ENCODE measurements at regions of chr16 and their contacts with region 1.

Region 1: DNA sequence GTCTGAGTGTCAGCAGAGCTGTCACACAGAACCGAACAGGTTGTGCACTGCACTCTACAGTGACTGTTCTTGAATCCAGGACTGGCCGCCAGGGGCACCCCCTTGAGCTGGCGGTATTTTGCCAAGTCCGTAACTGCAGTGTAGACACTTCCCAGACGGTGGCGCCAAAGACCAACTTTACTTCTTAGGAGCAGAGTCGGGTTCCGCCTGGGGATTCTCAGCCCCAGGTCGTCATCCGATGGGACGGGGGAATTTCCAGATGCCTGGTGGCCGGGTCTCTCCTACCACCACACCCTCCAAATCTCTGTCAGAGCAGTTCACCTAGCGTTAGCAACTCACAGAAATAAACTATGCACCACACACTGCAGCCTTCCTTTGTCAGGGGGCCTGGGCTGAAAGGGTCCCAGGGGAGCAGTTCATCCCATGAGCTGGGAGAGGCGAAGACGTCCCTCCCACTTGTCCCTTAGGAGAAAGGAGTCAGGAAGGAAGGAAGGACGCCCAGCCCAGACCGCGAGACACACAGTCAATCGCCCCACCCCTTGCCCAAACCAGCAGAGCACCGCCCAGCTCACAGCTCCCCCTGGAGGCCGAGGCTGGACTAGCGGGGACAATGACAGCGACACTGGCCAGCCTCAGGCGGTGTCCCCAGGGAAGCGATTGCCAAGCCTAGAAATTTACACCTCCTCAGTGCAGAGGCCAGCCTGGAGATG is 7.4 kb upstream of the RIPOR1 start:
- DNase-seq: peak; percentile 94 to 96
- ATAC-seq: peak; percentile 88 to 91
- H3K4me3 ChIP-seq: peak overlapping the region; percentile 64
- H3K27ac ChIP-seq: peak overlapping the region; percentile 92 to 95
- H3K4me1 ChIP-seq: peaks cover 52% of the 10 kb centered on the region
- CTCF ChIP-seq: peak; percentile 93
- EP300 ChIP-seq: no peak
- POLR2A ChIP-seq: peak; percentile 80
- RAD21 ChIP-seq: peak; percentile 93 to 95

Region 2: DNA sequence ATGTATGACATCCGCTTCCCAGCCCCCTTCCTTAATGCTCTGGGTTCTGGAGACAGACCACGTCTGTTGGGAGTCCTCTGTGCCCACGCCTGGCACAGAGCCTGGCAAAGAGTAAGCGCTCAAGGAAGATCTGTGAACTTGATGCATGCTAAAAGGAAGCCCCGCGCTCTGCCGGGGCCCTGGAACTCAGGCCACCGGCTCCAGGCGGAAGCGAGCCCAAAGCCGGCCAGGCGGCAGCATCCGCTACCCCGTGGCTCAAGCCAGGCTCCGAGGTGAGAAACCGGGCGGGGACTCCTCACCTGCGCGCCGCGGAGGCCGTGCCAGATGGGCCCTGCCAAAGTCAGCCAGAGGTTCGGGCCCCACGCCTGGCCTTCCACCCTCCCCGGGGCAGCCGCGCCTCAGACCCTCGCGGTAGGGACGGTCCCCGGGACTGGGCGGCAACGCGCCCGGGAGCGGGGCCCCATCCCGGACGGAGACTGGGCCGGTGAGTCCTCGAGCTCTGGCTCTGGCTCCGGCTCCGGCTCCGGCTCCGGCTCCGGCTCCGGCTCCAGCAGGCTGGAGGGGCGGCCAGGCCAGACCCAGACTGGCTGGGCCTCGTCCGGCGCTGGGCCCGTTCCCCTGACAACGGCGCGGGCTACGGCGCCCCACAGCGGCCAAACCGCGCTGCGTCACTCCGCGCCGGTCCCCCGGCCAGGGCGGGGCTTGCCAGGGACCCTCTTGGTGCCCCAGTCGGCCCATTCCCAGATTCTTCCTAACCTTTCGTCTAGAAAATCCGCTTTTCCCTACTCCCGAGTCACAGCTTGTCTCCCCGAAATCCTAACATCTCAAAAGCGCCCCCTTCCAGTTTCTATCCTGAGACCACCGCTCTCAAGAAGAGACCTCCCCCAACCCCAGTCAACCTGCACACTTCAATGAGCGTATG is 105.1 kb before region 1 on chr16 and contains the start of gene ZDHHC1:
- CTCF ChIA-PET with region 1: no interaction called
- POLR2A ChIA-PET with region 1: no interaction called
- DNase-seq: peak; percentile 78 to 89
- ATAC-seq: peak; percentile 94 to 96
- H3K4me3 ChIP-seq: peak within 1 kb of the TSS; percentile 80
- H3K27ac ChIP-seq: peak within 1 kb of the TSS; percentile 91 to 96
- H3K4me1 ChIP-seq: peaks cover 9% of the 10 kb centered on the region; the same call in 2 of the 3 replicates
- CTCF ChIP-seq: peak; percentile 70
- EP300 ChIP-seq: no peak
- POLR2A ChIP-seq: peak; percentile 49; the same call in 1 of the 2 replicates
- RAD21 ChIP-seq: peak; percentile 49 to 69
- polyA plus RNA-seq, gene ZDHHC1: 3.5 and 3.8 TPM in 2 replicates

Region 3: DNA sequence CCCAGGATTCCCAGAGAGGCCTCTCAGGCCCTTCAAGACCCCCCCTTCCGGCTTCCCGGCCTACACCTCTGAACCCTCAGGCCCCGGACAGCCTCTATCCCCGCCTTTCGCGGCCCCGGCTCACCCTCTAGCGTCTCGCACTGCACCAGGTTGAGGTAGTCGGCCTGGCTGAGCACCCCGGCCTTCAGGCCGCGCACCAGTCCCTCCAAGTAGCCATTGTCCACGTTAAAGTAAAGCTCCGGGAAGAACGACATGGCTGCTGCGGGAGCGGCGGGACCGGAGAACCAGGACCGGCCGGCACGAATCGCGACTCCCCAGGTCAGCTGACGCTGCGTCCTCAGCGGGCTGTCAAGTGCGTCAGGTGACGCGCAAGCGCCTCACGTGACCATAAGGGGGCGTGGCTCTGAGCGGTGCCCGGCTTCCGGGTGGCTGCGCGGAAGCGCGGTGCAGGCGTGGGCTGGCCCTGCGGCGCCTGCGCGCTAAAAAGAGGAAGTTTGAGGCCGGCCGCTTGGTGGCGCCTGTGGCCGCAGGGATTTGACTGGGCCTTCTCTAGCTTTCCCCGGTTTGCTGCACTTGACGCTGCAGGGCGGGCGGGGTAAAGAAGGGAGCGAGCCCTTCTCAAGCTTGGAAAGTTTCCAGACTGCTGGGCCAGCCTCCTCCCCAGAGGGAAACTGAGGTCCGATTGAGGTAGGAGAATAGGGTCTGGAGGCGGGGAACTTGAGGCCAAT is 40.3 kb before region 1 on chr16 and contains the start of gene ATP6V0D1:
- CTCF ChIA-PET with region 1: interaction called, 117 read pairs
- POLR2A ChIA-PET with region 1: interaction called, 12 read pairs
- DNase-seq: peak; percentile 95 to 98
- ATAC-seq: peak; percentile 91 to 93
- H3K4me3 ChIP-seq: peak within 1 kb of the TSS; percentile 91
- H3K27ac ChIP-seq: peak within 1 kb of the TSS; percentile 86 to 88
- H3K4me1 ChIP-seq: peaks cover 13% of the 10 kb centered on the region
- CTCF ChIP-seq: peak; percentile 88
- EP300 ChIP-seq: 0 out of 5 replicates have a peak, but pooled peaks of 1 of the 2 experiments have one; percentile 14
- POLR2A ChIP-seq: peak; percentile 62
- RAD21 ChIP-seq: peak; percentile 46 to 61; a peak in 4 of 5 replicates
- polyA plus RNA-seq, gene ATP6V0D1: 45.6 and 45.7 TPM in 2 replicates

Region 4: GRCh38 chr16:67504041-67505021 is 16.9 kb before region 1 on chr16:
- CTCF ChIA-PET with region 1: interaction called, 278 read pairs
- POLR2A ChIA-PET with region 1: no interaction called
- DNase-seq: peak in 1 of 2 experiments; percentile 31
- ATAC-seq: peak; percentile 24 to 28; a peak in 3 of 6 replicates
- H3K4me3 ChIP-seq: no peak overlapping the region
- H3K27ac ChIP-seq: no peak overlapping the region
- H3K4me1 ChIP-seq: peaks cover 8% of the 10 kb centered on the region; the same call in 1 of the 3 replicates
- CTCF ChIP-seq: no peak
- EP300 ChIP-seq: no peak
- POLR2A ChIP-seq: no peak
- RAD21 ChIP-seq: no peak

Region 5: DNA sequence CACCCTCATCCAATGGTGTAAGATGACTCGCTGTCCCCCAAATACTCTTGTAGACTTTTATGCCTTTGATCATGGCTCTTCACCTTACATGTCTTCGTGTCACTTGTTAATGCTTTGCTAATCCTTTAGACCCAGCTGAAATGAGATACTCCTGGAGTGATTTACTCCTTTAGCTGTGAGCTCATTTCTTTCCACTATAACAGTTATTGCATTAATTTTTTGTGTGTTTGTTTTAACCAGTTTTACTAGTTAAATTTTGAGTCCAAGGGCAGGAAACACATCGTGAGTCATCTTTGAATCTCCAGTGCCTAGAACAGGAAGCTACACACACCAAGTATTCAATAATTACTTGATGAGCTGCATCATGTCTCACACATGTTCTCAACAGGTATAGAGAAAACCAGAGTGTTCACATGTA is 34.6 kb after region 1 on chr16:
- CTCF ChIA-PET with region 1: interaction called, 301 read pairs
- POLR2A ChIA-PET with region 1: no interaction called
- DNase-seq: no peak
- ATAC-seq: peak in 1 of 2 experiments; percentile 29; a peak in 3 of 6 replicates
- H3K4me3 ChIP-seq: no peak overlapping the region
- H3K27ac ChIP-seq: peak overlapping the region in 1 of 2 experiments; percentile 16; a peak in 3 of 6 replicates
- H3K4me1 ChIP-seq: peaks cover 13% of the 10 kb centered on the region
- CTCF ChIP-seq: no peak
- EP300 ChIP-seq: no peak
- POLR2A ChIP-seq: no peak
- RAD21 ChIP-seq: no peak

Region 6: DNA sequence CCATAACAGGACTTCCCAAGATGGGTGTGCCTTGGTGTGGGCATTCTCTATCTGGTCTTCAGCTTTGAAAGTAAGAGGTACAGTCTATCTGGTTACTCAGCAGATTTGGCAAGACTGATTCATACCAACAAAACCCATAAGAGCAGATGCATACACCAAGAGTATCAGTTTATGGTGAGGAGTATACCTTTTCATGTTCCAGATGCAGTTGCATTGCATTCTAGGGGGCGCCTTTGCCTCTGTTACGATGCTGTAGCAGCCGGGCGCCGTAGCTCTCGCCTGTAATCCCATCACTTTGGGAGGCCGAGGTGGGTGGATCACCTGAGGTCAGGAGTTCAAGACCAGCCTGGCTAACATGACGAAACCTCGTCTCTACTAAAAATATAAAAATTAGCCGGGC is 92.6 kb after region 1 on chr16:
- CTCF ChIA-PET with region 1: interaction called, 14 read pairs
- POLR2A ChIA-PET with region 1: no interaction called
- DNase-seq: peak in 1 of 2 experiments; percentile 46
- ATAC-seq: peak in 1 of 2 experiments; percentile 56; a peak in 3 of 6 replicates
- H3K4me3 ChIP-seq: no peak overlapping the region
- H3K27ac ChIP-seq: no peak overlapping the region
- H3K4me1 ChIP-seq: no peaks in the 10 kb centered on the region
- CTCF ChIP-seq: no peak
- EP300 ChIP-seq: no peak
- POLR2A ChIP-seq: no peak
- RAD21 ChIP-seq: no peak

Region 7: GRCh38 chr16:67660564-67661028 is 139.3 kb after region 1 on chr16 and contains the start of gene PARD6A:
- CTCF ChIA-PET with region 1: interaction called, 174 read pairs
- POLR2A ChIA-PET with region 1: interaction called, 7 read pairs
- DNase-seq: peak; percentile 96 to 99
- ATAC-seq: peak; percentile 66 to 81
- H3K4me3 ChIP-seq: peak within 1 kb of the TSS; percentile 91
- H3K27ac ChIP-seq: peak within 1 kb of the TSS; percentile 90 to 92
- H3K4me1 ChIP-seq: peaks cover 8% of the 10 kb centered on the region
- CTCF ChIP-seq: no peak
- EP300 ChIP-seq: no peak
- POLR2A ChIP-seq: no peak
- RAD21 ChIP-seq: no peak
- polyA plus RNA-seq, gene PARD6A: 1.7 and 1.8 TPM in 2 replicates

Region 8: DNA sequence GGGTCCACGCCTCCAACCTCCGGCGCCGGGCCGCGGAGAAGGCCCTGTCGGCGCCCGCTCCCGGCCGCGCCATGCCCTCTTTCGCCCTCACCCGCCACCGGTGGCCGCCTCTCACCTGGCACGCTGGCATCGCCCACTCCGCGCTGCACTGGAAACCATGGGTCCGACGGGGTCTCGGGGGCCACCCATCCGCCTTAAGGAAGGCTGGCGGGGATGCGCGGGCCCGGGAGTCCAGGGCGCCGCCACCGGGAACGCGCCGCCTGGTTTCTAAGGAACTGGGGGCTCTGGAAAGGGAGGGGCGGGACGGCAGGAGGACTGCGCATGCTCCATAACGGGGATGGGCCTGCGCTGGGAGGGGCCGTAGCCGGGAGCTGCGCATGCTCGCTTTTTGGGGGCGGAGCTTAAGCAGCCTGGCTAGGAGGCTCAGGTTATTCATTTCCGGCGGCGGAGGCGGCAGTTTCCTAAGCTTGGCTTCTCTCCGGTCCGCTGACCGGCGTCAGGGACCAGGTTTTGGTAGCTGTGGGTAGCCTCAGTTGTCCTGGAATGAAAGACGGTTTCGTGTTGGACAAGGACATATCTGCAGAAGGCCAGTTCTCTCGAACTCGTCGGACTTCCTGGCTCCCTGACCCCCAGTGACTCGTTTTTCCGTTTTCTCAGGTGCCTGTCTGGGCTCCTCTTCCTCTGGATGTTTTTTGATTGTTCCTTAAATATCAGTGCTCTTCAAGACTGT is 198.0 kb after region 1 on chr16 and contains the start of gene GFOD2:
- CTCF ChIA-PET with region 1: interaction called, 12 read pairs
- POLR2A ChIA-PET with region 1: no interaction called
- DNase-seq: peak; percentile 94 to 100
- ATAC-seq: peak; percentile 80 to 90
- H3K4me3 ChIP-seq: peak within 1 kb of the TSS; percentile 90
- H3K27ac ChIP-seq: peak within 1 kb of the TSS; percentile 85 to 92
- H3K4me1 ChIP-seq: peaks cover 15% of the 10 kb centered on the region
- CTCF ChIP-seq: no peak
- EP300 ChIP-seq: no peak
- POLR2A ChIP-seq: peak; percentile 94
- RAD21 ChIP-seq: no peak
- polyA plus RNA-seq, gene GFOD2: 10.3 and 11.0 TPM in 2 replicates

Measured in A549 (cell line).